CD4-positive, alpha-beta T cell (primary cell): ENCODE measurements at regions of chr9 and their contacts with region 1.

Region 1: GRCh38 chr9:6757456-6758247 is at the start of gene KDM4C:
- DNase-seq: peak; percentile 87 to 98 (median 94)
- ATAC-seq: peak; percentile 70
- H3K4me3 ChIP-seq: peak within 1 kb of the TSS; percentile 90
- H3K4me3 Mint-ChIP-seq: peak within 1 kb of the TSS; percentile 96
- H3K27ac ChIP-seq: peak within 1 kb of the TSS; percentile 96 to 99
- H3K27ac Mint-ChIP-seq: peak within 1 kb of the TSS; percentile 96
- H3K4me1 ChIP-seq: peaks cover 26% of the 10 kb centered on the region
- H3K4me1 Mint-ChIP-seq: peaks cover 25% of the 10 kb centered on the region
- H3K27me3 ChIP-seq: no peaks in the 10 kb centered on the region
- H3K27me3 Mint-ChIP-seq: no peaks in the 10 kb centered on the region
- CTCF ChIP-seq: no peak
- total RNA-seq, gene KDM4C: 60.1 to 61.3 TPM

Region 2: DNA sequence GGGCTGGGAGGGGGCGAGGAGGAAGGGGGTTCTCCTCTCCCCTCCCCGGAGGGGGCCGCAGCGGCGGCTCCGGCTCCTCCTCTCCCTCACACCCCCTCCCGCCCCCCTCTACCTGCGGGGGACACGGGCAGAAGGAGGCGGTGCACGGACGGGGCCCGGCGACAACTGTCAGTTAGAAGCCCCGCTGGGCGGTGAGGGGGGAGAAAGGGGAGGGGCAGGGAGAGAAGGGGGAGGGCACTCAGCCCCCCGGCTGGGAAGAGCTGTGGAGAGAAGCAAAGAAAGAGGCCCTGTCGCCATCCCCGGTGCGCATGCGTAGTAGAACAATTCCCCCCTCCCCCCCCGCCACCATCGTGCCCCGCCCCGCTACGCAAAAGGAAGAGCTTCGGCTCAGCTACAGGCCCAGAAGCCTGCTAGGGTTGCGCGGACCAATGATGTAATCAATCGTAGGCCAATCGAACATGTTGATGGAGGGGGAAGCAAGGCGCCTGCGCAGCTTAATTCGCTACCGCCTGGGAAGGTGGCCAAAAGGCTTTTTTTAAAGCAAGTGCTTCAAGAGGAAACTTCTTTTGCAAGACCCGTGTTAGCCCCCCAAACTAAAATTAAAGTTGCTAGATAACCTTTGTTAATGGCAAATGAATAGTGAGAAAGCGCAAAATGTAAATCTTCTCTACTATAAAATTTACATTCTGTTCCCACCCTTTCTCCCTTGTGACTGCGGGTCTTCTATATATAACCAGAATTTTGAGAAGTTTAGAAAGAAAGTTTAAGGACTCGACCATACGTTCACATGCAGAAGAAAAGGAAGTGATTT is 749.3 kb before region 1 on chr9:
- CTCF ChIA-PET with region 1: no interaction called
- POLR2A ChIA-PET with region 1: interaction called, 23 read pairs
- intact Hi-C with region 1: loop called (anchors 2 to 5 kb)
- DNase-seq: peak; percentile 88 to 99 (median 92)
- ATAC-seq: peak; percentile 70
- H3K4me3 ChIP-seq: peak overlapping the region; percentile 87
- H3K4me3 Mint-ChIP-seq: peak overlapping the region; percentile 91
- H3K27ac ChIP-seq: peak overlapping the region; percentile 91 to 95
- H3K27ac Mint-ChIP-seq: peak overlapping the region; percentile 97
- H3K4me1 ChIP-seq: peaks cover 11% of the 10 kb centered on the region
- H3K4me1 Mint-ChIP-seq: peaks cover 70% of the 10 kb centered on the region
- H3K27me3 ChIP-seq: no peaks in the 10 kb centered on the region
- H3K27me3 Mint-ChIP-seq: no peaks in the 10 kb centered on the region
- CTCF ChIP-seq: no peak

Region 3: DNA sequence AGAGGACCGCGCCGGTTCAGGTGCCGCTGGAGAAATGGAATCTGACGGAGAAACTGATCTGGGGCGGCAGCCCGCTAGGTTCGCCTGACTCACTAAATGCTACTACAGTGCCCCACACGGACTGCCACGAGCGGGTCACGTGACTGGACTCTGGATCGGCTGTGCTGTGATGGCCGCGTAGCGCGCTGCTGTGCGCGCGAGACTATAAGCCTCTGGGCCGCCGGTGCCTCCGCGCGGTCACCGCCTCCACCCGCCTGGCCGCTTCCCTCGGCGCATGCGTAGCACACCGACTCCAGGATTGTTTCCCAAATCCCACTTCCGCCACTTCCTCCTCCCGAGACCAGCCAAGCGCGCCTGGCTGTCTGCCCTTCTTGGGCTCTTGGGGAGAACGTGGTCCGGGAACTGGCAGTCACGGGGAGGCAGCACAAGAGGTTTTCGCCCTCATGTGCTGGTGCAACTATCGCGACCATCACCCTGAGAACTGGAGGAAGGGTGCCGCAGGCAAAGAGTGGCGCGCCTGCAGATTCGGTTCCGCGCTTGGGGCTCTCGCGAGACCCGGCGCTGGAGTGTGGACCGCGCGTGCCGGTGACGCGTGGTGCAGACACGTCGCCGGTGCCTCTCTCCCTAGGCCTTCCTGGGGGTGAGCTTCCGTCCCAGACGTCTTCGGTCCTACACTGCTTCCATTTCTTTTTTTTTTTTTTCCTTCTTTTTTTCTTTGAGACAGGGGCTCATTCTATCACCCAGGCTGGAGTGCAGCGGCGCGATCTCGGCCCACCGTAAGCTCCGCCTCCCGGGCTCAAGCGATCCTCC is 76.3 kb before region 1 on chr9:
- CTCF ChIA-PET with region 1: interaction called, 5 read pairs
- POLR2A ChIA-PET with region 1: interaction called, 155 read pairs
- intact Hi-C with region 1: loop called (anchors 1 to 2 kb)
- DNase-seq: peak; percentile 82 to 97 (median 88)
- ATAC-seq: peak; percentile 90
- H3K4me3 ChIP-seq: peak overlapping the region; percentile 85
- H3K4me3 Mint-ChIP-seq: peak overlapping the region; percentile 89
- H3K27ac ChIP-seq: peak overlapping the region; percentile 96 to 98
- H3K27ac Mint-ChIP-seq: peak overlapping the region; percentile 99
- H3K4me1 ChIP-seq: peaks cover 23% of the 10 kb centered on the region
- H3K4me1 Mint-ChIP-seq: peaks cover 17% of the 10 kb centered on the region
- H3K27me3 ChIP-seq: no peaks in the 10 kb centered on the region
- H3K27me3 Mint-ChIP-seq: no peaks in the 10 kb centered on the region
- CTCF ChIP-seq: no peak

Region 4: DNA sequence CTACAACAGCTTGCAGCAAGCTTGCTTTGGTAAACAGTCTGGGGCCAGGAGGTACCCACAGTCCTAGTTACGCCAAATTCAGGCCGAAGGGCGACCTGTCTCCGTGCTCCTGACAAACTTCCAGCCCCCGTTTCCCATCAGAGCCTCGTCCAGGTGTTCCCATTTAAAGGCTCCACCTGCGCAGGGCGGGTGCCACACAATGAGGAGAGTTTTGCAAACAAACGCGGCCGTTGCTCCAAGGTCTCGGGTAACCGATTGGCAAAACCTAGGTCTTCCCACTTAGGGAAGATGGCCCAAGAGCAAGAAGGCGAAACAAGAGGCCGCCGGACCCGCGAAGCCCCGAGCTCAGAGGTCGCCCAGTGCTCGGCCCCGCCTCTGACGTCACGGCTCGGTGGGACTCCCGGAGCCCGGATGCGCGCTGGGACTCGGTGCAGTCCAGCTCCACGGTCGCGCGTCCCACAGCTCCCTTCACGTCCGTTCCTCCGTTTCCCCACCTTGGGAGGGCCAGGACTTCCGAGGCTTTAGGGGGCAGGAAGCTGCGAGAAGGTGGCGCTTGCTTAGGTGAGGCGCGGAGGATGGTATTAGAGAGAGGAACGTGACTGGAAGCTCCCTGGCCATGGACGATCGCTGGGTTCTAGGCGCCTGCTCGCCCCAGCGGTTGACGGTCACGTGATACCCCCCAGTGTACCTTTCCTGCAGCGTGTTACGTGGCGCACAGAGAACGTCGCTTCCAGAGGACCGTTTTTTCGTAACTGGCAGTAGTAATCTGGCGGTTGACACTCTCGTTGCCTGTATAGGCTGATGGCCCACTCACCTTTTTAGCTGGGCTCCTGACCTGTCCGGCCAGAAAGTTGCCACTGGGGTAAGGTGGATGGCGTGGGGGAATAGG is 41.7 kb before region 1 on chr9:
- CTCF ChIA-PET with region 1: no interaction called
- POLR2A ChIA-PET with region 1: interaction called, 108 read pairs
- intact Hi-C with region 1: loop called (anchors 2 to 5 kb)
- DNase-seq: peak; percentile 40 to 83 (median 56)
- ATAC-seq: peak; percentile 88
- H3K4me3 ChIP-seq: peak overlapping the region; percentile 72
- H3K4me3 Mint-ChIP-seq: peak overlapping the region; percentile 92
- H3K27ac ChIP-seq: peak overlapping the region in 1 of 2 donors; percentile 50
- H3K27ac Mint-ChIP-seq: peak overlapping the region; percentile 87
- H3K4me1 ChIP-seq: peaks cover 17% of the 10 kb centered on the region
- H3K4me1 Mint-ChIP-seq: peaks cover 6% of the 10 kb centered on the region
- H3K27me3 ChIP-seq: no peaks in the 10 kb centered on the region
- H3K27me3 Mint-ChIP-seq: no peaks in the 10 kb centered on the region
- CTCF ChIP-seq: no peak

Region 5: DNA sequence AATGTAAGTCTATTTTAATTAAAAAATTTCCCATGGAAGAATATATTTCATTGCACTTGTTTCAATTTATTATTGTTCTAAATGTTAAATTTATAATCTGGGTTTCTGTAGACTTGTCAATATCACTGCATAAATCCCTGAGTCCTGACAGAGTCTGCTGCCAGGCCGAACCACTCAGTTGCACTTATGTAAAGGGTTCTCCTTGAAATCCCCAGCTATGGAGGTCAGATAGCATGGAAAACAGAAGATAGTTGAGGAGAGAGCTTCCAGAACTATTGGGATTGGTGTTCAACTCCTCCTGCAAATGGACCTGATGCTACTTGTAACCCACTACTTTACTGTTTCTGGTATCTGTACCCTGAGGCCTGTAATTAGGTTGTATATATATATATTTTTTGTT is 37.3 kb after region 1 on chr9:
- CTCF ChIA-PET with region 1: no interaction called
- POLR2A ChIA-PET with region 1: interaction called, 11 read pairs
- intact Hi-C with region 1: no loop called
- DNase-seq: no peak
- ATAC-seq: no peak
- H3K4me3 ChIP-seq: no peak overlapping the region
- H3K4me3 Mint-ChIP-seq: no peak overlapping the region
- H3K27ac ChIP-seq: no peak overlapping the region
- H3K27ac Mint-ChIP-seq: no peak overlapping the region
- H3K4me1 ChIP-seq: no peaks in the 10 kb centered on the region
- H3K4me1 Mint-ChIP-seq: peaks cover 25% of the 10 kb centered on the region
- H3K27me3 ChIP-seq: no peaks in the 10 kb centered on the region
- H3K27me3 Mint-ChIP-seq: no peaks in the 10 kb centered on the region
- CTCF ChIP-seq: no peak